K562 (cell line): ENCODE measurements at regions of chrX and their contacts with region 1.

Region 1: GRCh38 chrX:5458300-5458842 is 770.3 kb downstream of the NLGN4X start:
- DNase-seq: no peak
- ATAC-seq: no peak
- H3K4me3 ChIP-seq: no peak overlapping the region
- H3K27ac ChIP-seq: no peak overlapping the region
- H3K4me1 ChIP-seq: no peaks in the 10 kb centered on the region
- H3K27me3 ChIP-seq: no peaks in the 10 kb centered on the region
- CTCF ChIP-seq: no peak
- EP300 ChIP-seq: no peak
- POLR2A ChIP-seq: no peak
- RAD21 ChIP-seq: no peak

Region 2: GRCh38 chrX:4320436-4320947 is 1137.9 kb before region 1 on chrX:
- CTCF ChIA-PET with region 1: no interaction called
- POLR2A ChIA-PET with region 1: no interaction called
- in situ Hi-C with region 1: loop called (anchors 10 kb)
- intact Hi-C with region 1: no loop called
- DNase-seq: no peak
- ATAC-seq: no peak
- H3K4me3 ChIP-seq: no peak overlapping the region
- H3K27ac ChIP-seq: no peak overlapping the region
- H3K4me1 ChIP-seq: no peaks in the 10 kb centered on the region
- H3K27me3 ChIP-seq: no peaks in the 10 kb centered on the region
- CTCF ChIP-seq: no peak
- EP300 ChIP-seq: no peak
- POLR2A ChIP-seq: no peak
- RAD21 ChIP-seq: no peak

Region 3: DNA sequence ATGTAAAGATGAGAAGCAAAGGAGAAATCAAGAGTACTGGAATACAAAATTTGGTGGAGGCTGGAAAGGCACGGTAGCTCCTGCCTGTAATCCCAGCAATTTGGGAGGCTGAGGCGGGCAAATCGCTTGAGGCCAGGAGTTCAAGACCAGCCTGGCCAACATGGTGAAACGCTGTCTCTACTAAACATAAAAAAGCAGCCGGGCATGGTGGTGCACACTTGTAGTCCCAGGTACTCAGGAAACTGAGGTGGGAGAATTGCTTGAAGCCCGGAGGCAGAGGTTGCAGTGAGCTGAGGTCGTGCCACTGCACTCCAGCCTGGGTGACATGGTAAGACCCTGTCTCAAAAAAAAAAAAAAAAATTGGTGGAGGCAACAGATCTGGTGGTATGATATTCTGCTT is 315.7 kb before region 1 on chrX:
- CTCF ChIA-PET with region 1: no interaction called
- POLR2A ChIA-PET with region 1: no interaction called
- in situ Hi-C with region 1: no loop called
- intact Hi-C with region 1: no loop called
- DNase-seq: no peak
- ATAC-seq: no peak
- H3K4me3 ChIP-seq: no peak overlapping the region
- H3K27ac ChIP-seq: no peak overlapping the region
- H3K4me1 ChIP-seq: no peaks in the 10 kb centered on the region
- H3K27me3 ChIP-seq: no peaks in the 10 kb centered on the region
- CTCF ChIP-seq: no peak
- EP300 ChIP-seq: no peak
- POLR2A ChIP-seq: no peak
- RAD21 ChIP-seq: no peak